Caco-2 (cell line): ENCODE measurements at regions of chr10 and their contacts with region 1.

Region 1: DNA sequence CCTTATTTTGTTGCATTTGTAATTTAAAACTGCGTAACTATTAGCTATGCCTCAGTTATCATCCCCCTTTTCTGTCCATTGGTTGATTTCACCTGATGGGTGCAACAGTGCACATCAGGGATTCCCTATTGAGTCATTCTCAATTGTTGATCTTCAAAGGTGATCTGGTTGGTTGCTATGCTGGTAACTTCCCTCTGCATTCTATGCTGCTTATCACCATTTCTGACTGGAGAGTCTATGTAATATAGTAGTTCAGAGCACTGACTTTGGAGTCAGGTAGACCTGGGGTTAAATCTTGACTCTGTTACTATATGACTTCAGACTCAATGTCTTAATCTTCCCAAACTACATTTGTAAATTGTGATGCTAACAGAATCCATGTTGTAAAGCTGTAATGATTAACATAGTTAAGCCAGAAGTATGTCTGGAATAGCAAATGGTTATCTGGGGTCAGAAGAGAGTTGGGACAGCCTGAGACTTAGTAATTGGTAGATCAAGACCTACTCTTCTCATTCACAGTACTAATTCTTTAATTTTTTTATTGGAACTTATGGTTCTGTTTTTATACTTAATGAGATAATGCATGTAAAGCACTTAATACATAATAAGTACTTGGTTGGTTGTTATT is 38.1 kb downstream of the EXOC6 start:
- DNase-seq: peak; percentile 37 to 53
- H3K4me3 ChIP-seq: no peak overlapping the region
- H3K4me3 Mint-ChIP-seq: no peak overlapping the region
- H3K27ac Mint-ChIP-seq: peak overlapping the region; percentile 58
- H3K4me1 ChIP-seq: peaks cover 46% of the 10 kb centered on the region
- H3K4me1 Mint-ChIP-seq: peaks cover 12% of the 10 kb centered on the region
- H3K27me3 ChIP-seq: no peaks in the 10 kb centered on the region
- H3K27me3 Mint-ChIP-seq: no peaks in the 10 kb centered on the region
- CTCF ChIP-seq: no peak

Region 2: GRCh38 chr10:92914478-92915325 is 28.3 kb after region 1 on chr10:
- CTCF ChIA-PET with region 1: interaction called, 4 read pairs
- POLR2A ChIA-PET with region 1: interaction called, 3 read pairs
- intact Hi-C with region 1: loop called (anchors 1 kb)
- DNase-seq: peak; percentile 69 to 76
- H3K4me3 ChIP-seq: no peak overlapping the region
- H3K4me3 Mint-ChIP-seq: no peak overlapping the region
- H3K27ac Mint-ChIP-seq: no peak overlapping the region
- H3K4me1 ChIP-seq: no peaks in the 10 kb centered on the region; the same call in 1 of the 2 replicates
- H3K4me1 Mint-ChIP-seq: peaks cover 10% of the 10 kb centered on the region
- H3K27me3 ChIP-seq: no peaks in the 10 kb centered on the region
- H3K27me3 Mint-ChIP-seq: no peaks in the 10 kb centered on the region
- CTCF ChIP-seq: peak; percentile 79 to 85

Region 3: GRCh38 chr10:92965314-92965713 is 78.9 kb after region 1 on chr10:
- CTCF ChIA-PET with region 1: no interaction called
- POLR2A ChIA-PET with region 1: no interaction called
- intact Hi-C with region 1: loop called (anchors 1 kb)
- DNase-seq: peak in 1 of 2 experiments; percentile 49
- H3K4me3 ChIP-seq: no peak overlapping the region
- H3K4me3 Mint-ChIP-seq: no peak overlapping the region
- H3K27ac Mint-ChIP-seq: no peak overlapping the region
- H3K4me1 ChIP-seq: no peaks in the 10 kb centered on the region
- H3K4me1 Mint-ChIP-seq: no peaks in the 10 kb centered on the region
- H3K27me3 ChIP-seq: no peaks in the 10 kb centered on the region
- H3K27me3 Mint-ChIP-seq: no peaks in the 10 kb centered on the region
- CTCF ChIP-seq: peak; percentile 56 to 59

Region 4: GRCh38 chr10:93224005-93224779 is 337.7 kb after region 1 on chr10:
- CTCF ChIA-PET with region 1: no interaction called
- POLR2A ChIA-PET with region 1: no interaction called
- intact Hi-C with region 1: no loop called
- DNase-seq: no peak
- H3K4me3 ChIP-seq: no peak overlapping the region
- H3K4me3 Mint-ChIP-seq: no peak overlapping the region
- H3K27ac Mint-ChIP-seq: no peak overlapping the region
- H3K4me1 ChIP-seq: no peaks in the 10 kb centered on the region
- H3K4me1 Mint-ChIP-seq: no peaks in the 10 kb centered on the region
- H3K27me3 ChIP-seq: no peaks in the 10 kb centered on the region
- H3K27me3 Mint-ChIP-seq: no peaks in the 10 kb centered on the region
- CTCF ChIP-seq: peak in 1 of 2 experiments; percentile 30

Region 5: GRCh38 chr10:93352638-93353383 is 466.4 kb after region 1 on chr10:
- CTCF ChIA-PET with region 1: no interaction called
- POLR2A ChIA-PET with region 1: no interaction called
- intact Hi-C with region 1: loop called (anchors 5 kb)
- DNase-seq: peak in 1 of 2 experiments; percentile 58
- H3K4me3 ChIP-seq: no peak overlapping the region
- H3K4me3 Mint-ChIP-seq: no peak overlapping the region
- H3K27ac Mint-ChIP-seq: no peak overlapping the region
- H3K4me1 ChIP-seq: peaks cover 3% of the 10 kb centered on the region; the same call in 1 of the 2 replicates
- H3K4me1 Mint-ChIP-seq: peaks cover 4% of the 10 kb centered on the region
- H3K27me3 ChIP-seq: no peaks in the 10 kb centered on the region
- H3K27me3 Mint-ChIP-seq: no peaks in the 10 kb centered on the region
- CTCF ChIP-seq: peak; percentile 42 to 61